A549 (cell line): ENCODE measurements at regions of chr20 and their contacts with region 1.

Region 1: DNA sequence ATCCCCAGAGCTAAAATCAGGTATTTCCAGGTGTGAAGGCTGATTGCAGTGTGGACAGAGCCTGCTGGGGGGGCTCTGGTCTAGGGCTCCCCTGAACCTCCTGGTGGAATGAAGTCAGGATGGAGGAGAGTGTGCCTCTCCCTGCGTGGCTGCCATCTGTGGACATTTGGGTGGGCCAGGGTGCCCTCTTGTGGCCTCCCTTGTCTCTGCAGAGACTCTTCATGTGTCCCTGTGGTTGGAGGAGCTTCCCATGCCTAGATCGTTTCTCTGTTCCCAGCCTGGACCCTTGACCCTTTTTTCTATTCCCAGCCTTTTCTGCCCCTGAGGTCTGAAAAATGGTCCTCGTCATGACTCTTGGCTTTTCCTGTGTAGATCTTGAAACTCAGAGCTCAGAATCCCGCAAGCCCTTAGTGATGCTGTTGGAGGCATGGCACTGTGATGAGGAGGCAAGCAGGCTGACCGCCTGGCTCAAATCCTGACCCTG is 9.9 kb upstream of the PSMF1 start:
- DNase-seq: peak; percentile 61 to 75
- ATAC-seq: peak; percentile 96 to 98
- H3K4me3 ChIP-seq: no peak overlapping the region
- H3K27ac ChIP-seq: no peak overlapping the region
- H3K4me1 ChIP-seq: no peaks in the 10 kb centered on the region
- CTCF ChIP-seq: peak; percentile 74
- EP300 ChIP-seq: no peak
- POLR2A ChIP-seq: no peak
- RAD21 ChIP-seq: peak; percentile 63 to 68

Region 2: GRCh38 chr20:462199-462991 is 646.1 kb before region 1 on chr20 and contains the start of gene TBC1D20:
- CTCF ChIA-PET with region 1: no interaction called
- POLR2A ChIA-PET with region 1: no interaction called
- DNase-seq: peak; percentile 89 to 92
- ATAC-seq: peak; percentile 94 to 96
- H3K4me3 ChIP-seq: peak within 1 kb of the TSS; percentile 82
- H3K27ac ChIP-seq: peak within 1 kb of the TSS; percentile 91 to 92
- H3K4me1 ChIP-seq: peaks cover 25% of the 10 kb centered on the region
- CTCF ChIP-seq: peak; percentile 58
- EP300 ChIP-seq: no peak
- POLR2A ChIP-seq: peak; percentile 94
- RAD21 ChIP-seq: peak in 1 of 2 experiments; percentile 29; a peak in 1 of 5 replicates
- polyA plus RNA-seq, gene TBC1D20: 43.4 and 53.9 TPM in 2 replicates

Region 3: DNA sequence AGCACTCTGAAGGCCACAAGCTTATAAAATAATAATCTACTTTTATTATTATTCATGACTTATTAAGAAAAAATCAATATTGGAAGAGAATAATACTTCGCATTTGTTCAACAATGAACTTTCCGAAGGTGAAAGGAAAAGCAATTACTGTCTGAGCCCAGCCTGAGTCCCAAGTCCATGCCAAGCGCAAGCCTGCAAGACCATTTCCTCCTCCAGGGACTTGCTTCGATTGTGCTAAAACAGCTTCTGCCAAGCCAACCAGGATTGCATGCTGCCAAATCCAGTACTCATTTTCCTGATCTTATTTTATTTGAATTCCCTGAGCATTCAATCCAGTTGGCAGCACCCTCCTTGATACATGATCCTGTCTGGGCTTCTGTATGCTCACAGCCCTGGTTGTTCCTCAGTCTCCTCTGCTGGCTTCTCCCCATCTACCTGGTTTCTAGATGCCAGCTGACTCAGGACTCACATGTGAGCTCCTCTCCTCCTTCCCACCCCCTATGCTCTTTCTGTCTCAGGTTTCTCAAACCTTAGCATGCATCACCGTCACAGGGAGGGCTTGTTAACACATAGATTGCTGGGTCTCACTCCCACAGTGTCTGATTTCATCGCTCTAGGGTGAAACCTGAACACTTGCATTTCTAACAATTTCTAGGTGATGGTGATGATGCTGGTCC is 46.0 kb before region 1 on chr20:
- CTCF ChIA-PET with region 1: interaction called, 10 read pairs
- POLR2A ChIA-PET with region 1: no interaction called
- DNase-seq: no peak
- ATAC-seq: no peak
- H3K4me3 ChIP-seq: no peak overlapping the region
- H3K27ac ChIP-seq: no peak overlapping the region
- H3K4me1 ChIP-seq: no peaks in the 10 kb centered on the region
- CTCF ChIP-seq: no peak
- EP300 ChIP-seq: no peak
- POLR2A ChIP-seq: no peak
- RAD21 ChIP-seq: no peak

Region 4: DNA sequence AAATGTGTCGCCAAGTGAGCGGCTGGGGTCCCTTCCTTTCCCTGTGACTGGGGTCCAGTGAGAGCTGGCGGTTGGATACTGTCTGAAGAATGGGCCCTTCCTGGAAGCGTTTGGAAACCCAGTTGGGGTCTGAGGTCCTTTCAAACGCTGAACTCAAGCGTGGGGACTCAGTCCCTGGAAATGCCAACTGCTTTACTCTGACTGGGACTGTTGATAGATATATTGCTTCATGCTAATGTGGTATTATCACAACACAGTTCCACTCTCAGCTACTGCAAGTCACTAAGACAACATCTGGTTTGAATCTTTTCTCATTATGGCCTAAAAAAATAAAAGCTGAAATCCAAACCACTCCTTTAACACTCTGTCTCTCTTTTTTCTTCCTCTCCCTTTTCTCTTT is 13.7 kb before region 1 on chr20:
- CTCF ChIA-PET with region 1: interaction called, 39 read pairs
- POLR2A ChIA-PET with region 1: interaction called, 3 read pairs
- DNase-seq: no peak
- ATAC-seq: no peak
- H3K4me3 ChIP-seq: no peak overlapping the region
- H3K27ac ChIP-seq: no peak overlapping the region
- H3K4me1 ChIP-seq: no peaks in the 10 kb centered on the region
- CTCF ChIP-seq: no peak
- EP300 ChIP-seq: no peak
- POLR2A ChIP-seq: no peak
- RAD21 ChIP-seq: no peak

Region 5: DNA sequence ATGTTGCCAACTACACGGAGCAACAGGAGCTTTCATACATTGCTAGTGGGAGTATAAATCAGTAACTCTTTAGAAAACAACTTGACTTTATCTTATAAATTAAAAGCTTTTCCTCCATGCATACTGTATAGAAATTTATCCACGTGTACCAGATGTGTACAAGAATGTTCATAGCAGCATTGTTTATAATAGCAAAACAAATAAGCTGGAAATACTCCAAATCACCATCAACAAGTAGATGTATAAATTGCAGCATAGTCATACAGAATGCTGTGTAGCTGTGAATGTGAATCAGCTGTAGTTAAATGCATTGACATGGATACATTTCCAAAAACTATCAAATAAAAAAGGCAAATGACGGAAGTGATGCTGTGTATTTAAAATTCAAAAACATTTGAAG is 15.9 kb after region 1 on chr20:
- CTCF ChIA-PET with region 1: interaction called, 50 read pairs
- POLR2A ChIA-PET with region 1: no interaction called
- DNase-seq: no peak
- ATAC-seq: no peak
- H3K4me3 ChIP-seq: no peak overlapping the region
- H3K27ac ChIP-seq: no peak overlapping the region
- H3K4me1 ChIP-seq: peaks cover 41% of the 10 kb centered on the region
- CTCF ChIP-seq: no peak
- EP300 ChIP-seq: no peak
- POLR2A ChIP-seq: no peak
- RAD21 ChIP-seq: no peak

Region 6: DNA sequence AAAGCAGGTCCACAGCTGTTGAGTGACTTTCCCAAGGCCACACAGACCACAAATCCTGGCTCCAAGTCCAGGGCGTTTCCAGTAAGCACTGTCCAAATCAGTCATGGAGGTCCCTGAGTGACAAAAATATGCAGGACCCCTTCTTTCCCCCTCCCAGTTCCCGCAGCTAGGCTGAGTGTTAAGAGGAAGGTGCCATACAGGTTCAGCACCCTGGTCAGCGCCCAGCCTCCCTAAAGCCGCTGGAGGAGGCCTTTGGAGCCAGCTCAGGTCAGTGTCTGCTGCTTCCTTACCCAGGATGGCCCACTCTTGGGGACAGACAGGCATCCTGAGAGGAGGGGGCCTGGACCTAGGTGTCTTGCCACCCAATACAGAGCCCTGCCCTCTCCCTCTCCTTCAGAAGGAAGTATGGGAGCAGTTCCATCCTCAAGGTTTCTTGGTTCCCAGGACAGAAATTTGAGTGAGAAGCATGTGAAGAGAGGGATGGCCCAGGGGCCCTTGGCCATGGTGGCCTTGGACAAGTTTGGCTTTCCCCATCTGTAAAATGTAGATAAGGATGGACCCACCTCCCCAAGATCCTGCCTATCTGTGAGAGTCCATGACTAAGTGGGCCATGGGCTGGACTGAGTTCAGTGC is 63.1 kb after region 1 on chr20:
- CTCF ChIA-PET with region 1: interaction called, 13 read pairs
- POLR2A ChIA-PET with region 1: no interaction called
- DNase-seq: peak in 1 of 2 experiments; percentile 24
- ATAC-seq: peak in 1 of 2 experiments; percentile 25; a peak in 3 of 6 replicates
- H3K4me3 ChIP-seq: no peak overlapping the region
- H3K27ac ChIP-seq: no peak overlapping the region
- H3K4me1 ChIP-seq: no peaks in the 10 kb centered on the region
- CTCF ChIP-seq: no peak
- EP300 ChIP-seq: no peak
- POLR2A ChIP-seq: no peak
- RAD21 ChIP-seq: no peak

Region 7: GRCh38 chr20:1212607-1213396 is 104.3 kb after region 1 on chr20:
- CTCF ChIA-PET with region 1: interaction called, 23 read pairs
- POLR2A ChIA-PET with region 1: no interaction called
- DNase-seq: peak; percentile 82 to 83
- ATAC-seq: peak; percentile 96 to 99
- H3K4me3 ChIP-seq: no peak overlapping the region
- H3K27ac ChIP-seq: no peak overlapping the region
- H3K4me1 ChIP-seq: no peaks in the 10 kb centered on the region
- CTCF ChIP-seq: peak; percentile 92
- EP300 ChIP-seq: no peak
- POLR2A ChIP-seq: no peak
- RAD21 ChIP-seq: peak; percentile 89 to 91

Region 8: DNA sequence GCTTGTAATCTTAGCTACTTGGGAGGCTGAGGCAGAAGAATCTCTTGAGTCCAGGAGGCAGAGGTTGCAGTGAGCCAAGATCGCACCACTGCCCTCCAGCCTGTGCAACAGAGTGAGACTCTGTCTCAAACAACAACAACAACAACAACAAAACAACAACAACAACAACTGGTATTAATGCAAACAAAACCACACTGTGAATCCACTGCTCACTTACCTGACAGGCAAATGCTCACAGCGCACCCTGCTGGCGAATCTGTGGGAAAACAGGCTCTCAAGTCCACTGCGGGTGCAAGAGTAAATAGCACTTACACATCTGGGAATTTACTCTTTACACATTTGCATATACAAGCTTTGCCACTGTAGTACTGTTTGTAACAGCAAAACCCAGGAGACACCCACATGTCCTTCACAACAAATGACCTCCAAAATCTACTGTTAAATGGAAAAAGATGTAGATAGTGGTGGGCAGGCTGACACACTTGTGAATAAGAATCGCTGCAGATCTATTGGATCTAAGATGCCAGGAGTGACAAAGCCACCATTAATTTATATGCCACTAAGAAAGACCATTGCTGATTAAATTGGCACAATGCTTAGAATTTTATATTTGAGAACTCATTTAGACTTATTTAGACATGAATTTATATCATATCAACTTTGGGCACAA is 328.9 kb after region 1 on chr20:
- CTCF ChIA-PET with region 1: no interaction called
- POLR2A ChIA-PET with region 1: no interaction called
- DNase-seq: peak; percentile 85 to 91
- ATAC-seq: peak; percentile 68 to 83; a peak in 4 of 6 replicates
- H3K4me3 ChIP-seq: no peak overlapping the region
- H3K27ac ChIP-seq: no peak overlapping the region
- H3K4me1 ChIP-seq: no peaks in the 10 kb centered on the region
- CTCF ChIP-seq: peak; percentile 96
- EP300 ChIP-seq: no peak
- POLR2A ChIP-seq: no peak
- RAD21 ChIP-seq: peak; percentile 86 to 90